MCF 10A (cell line): ENCODE measurements at regions of chr16 and their contacts with region 1.

Region 1: DNA sequence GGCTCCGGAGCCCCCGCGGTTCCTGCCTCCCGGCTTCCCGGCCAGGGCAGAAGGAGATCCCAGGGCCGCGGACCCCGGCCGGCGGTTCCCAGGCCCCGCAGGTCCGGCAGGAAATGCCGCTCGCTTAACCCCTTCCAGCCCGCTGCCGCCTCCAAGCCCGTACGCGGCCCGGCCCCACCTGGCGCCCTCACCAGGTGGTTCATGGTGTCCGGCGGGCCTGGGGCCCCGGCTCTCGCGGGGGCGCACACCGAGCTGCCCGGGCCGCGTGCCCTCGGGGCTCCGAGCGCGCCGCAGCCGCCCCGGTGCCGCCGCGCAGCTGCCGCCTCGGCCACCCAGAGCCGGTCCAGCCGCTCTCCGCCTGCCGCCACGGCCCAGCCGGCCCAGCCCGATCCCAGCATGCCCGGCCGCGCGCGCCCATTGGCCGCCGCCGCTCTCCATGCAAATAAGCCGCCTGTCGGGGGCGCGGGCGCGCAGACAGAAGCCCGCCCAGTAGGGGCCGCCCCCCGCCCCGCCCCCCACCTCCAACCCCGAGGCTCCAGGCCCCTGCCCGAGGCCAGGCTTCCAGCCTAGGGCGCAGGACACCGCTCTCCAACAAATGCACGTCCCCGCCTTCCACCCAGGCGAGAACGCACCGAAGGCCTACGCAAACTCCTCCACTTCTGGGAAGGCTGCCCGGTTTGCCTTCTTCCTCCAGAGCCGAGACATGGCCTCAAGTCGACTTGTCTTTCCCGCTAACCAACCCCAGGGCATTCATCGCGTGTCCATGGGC is at the start of gene BCAR1:
- DNase-seq: peak; percentile 81
- H3K4me3 Mint-ChIP-seq: peak within 1 kb of the TSS; percentile 75
- H3K27ac Mint-ChIP-seq: peak within 1 kb of the TSS; percentile 82
- H3K4me1 Mint-ChIP-seq: peaks cover 32% of the 10 kb centered on the region
- H3K27me3 Mint-ChIP-seq: no peaks in the 10 kb centered on the region
- CTCF ChIP-seq: no peak
- total RNA-seq, gene BCAR1: 58.6 and 68.1 TPM in 2 replicates

Region 2: DNA sequence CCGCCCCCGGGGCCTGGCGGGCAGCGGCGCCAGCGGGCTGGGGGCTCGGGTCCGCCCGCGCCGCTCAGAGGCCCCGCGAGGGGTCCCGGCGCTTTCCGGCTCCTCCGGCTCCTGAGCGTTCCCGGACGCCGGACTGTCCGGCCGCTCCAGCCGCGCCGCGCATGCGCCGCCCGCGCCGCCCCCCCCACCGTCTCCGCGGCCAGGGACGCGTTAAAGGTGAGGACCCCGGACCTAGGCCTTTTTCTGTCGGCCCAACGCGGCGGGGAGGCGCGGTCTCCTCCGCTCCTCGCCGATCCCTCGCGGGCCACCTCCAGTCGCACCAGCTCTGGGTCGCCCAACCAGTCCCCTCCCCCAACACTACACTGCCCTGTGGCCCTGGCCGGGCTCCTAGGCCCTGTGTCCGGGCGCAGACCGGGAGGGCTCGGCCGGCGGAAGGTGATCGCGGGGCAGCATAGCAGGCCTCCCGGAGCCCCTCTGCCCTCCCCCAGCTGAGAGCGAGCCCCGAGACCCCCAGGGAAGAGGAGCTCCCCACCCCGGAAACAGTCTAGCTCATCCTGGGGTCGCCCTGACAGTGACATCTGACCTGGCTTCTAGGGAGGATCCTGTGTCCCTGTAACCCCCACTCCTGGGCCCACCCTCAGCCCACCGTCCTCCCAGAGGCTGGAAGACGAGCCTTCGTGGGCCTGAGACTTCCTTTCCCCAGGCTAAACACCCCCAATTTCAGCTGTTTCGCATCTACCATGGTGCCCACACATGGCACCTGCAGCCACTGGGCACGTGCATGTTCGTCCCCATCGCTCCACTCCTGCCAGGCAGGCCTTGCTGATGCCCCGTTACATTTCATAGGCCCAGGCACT is 14.6 kb after region 1 on chr16:
- CTCF ChIA-PET with region 1: interaction called, 10 read pairs
- POLR2A ChIA-PET with region 1: interaction called, 53 read pairs
- intact Hi-C with region 1: no loop called
- DNase-seq: peak; percentile 65
- H3K4me3 Mint-ChIP-seq: peak overlapping the region; percentile 79
- H3K27ac Mint-ChIP-seq: peak overlapping the region; percentile 73
- H3K4me1 Mint-ChIP-seq: peaks cover 17% of the 10 kb centered on the region
- H3K27me3 Mint-ChIP-seq: no peaks in the 10 kb centered on the region
- CTCF ChIP-seq: no peak

Region 3: DNA sequence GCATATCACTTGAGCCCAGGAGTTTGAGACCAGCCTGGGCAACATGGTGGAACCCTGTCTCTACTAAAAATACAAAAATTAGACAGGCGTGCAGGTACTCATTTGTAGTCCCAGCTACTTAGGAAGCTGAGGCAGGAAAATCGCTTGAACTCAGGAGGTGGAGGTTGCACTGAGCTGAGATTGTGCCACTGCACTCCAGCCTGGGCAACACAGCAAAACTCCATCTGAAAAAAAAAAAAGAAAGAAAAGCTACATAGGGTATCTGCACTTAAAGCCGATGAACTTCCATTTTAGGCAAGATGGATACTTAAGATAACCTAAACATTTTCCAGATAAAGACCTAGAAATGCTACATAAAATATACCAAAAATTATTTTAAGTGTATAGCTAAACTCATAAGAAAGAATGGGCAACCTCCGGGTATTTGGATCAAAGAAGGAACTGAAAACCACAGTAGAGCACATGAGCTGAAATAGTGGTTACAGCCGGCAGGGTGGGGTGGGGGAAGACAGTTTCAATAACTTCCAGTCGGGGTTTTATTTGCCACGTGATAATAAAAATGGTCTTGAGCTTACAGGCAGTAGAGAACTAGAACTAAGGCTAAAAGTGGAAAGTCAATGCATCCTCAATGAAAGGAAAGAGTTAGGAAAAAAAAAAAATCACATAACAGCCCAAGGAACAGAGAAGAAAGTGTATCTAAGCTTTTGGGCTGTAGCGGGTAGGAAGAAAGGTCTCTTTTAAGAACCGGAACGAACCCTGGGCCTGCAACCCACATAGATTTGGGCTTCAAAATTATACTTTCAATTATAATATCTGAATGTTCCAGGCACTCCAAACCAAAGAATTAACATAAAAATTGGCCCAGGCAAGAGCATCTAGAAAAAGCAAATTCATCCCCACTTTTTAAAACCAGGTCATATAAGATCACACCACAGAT is 128.7 kb after region 1 on chr16:
- CTCF ChIA-PET with region 1: interaction called, 5 read pairs
- POLR2A ChIA-PET with region 1: interaction called, 31 read pairs
- intact Hi-C with region 1: no loop called
- DNase-seq: no peak
- H3K4me3 Mint-ChIP-seq: no peak overlapping the region
- H3K27ac Mint-ChIP-seq: peak overlapping the region; percentile 19
- H3K4me1 Mint-ChIP-seq: peaks cover 38% of the 10 kb centered on the region
- H3K27me3 Mint-ChIP-seq: no peaks in the 10 kb centered on the region
- CTCF ChIP-seq: no peak

Region 4: GRCh38 chr16:75385507-75386152 is 134.2 kb after region 1 on chr16:
- CTCF ChIA-PET with region 1: interaction called, 5 read pairs
- POLR2A ChIA-PET with region 1: interaction called, 31 read pairs
- intact Hi-C with region 1: no loop called
- DNase-seq: peak; percentile 85
- H3K4me3 Mint-ChIP-seq: no peak overlapping the region
- H3K27ac Mint-ChIP-seq: no peak overlapping the region
- H3K4me1 Mint-ChIP-seq: peaks cover 12% of the 10 kb centered on the region
- H3K27me3 Mint-ChIP-seq: no peaks in the 10 kb centered on the region
- CTCF ChIP-seq: peak; percentile 66